Activated T-helper 1 cell treated with anti-CD3 and anti-CD28 coated beads, Interleukin-12 subunit alpha, Interleukin-12 subunit beta, Interleukin-2, Interleukin-4 antibody, amounts not matched to agents 30 ng/mL and 10 ng/mL and 1 ng/mL, durations not matched to agents 14 hours and 24 hours and 36 hours (primary cell): ENCODE measurements at regions of chr10 and their contacts with region 1.

Region 1: GRCh38 chr10:72048450-72049124 is 39.8 kb downstream of the SPOCK2 start:
- DNase-seq: peak; percentile 75
- H3K4me3 Mint-ChIP-seq: no peak overlapping the region
- H3K27ac Mint-ChIP-seq: peak overlapping the region; percentile 0
- H3K4me1 Mint-ChIP-seq: peaks cover 12% of the 10 kb centered on the region
- H3K27me3 Mint-ChIP-seq: peaks cover 3% of the 10 kb centered on the region

Region 2: GRCh38 chr10:70602665-70603448 is 1445.7 kb before region 1 on chr10 and contains the start of gene PRF1:
- intact Hi-C with region 1: no loop called
- DNase-seq: peak; percentile 66
- H3K4me3 Mint-ChIP-seq: peak within 1 kb of the TSS; percentile 95
- H3K27ac Mint-ChIP-seq: peak within 1 kb of the TSS; percentile 97
- H3K4me1 Mint-ChIP-seq: peaks cover 32% of the 10 kb centered on the region
- H3K27me3 Mint-ChIP-seq: no peaks in the 10 kb centered on the region
- total RNA-seq, gene PRF1: 100 and 103 TPM in 2 replicates

Region 3: DNA sequence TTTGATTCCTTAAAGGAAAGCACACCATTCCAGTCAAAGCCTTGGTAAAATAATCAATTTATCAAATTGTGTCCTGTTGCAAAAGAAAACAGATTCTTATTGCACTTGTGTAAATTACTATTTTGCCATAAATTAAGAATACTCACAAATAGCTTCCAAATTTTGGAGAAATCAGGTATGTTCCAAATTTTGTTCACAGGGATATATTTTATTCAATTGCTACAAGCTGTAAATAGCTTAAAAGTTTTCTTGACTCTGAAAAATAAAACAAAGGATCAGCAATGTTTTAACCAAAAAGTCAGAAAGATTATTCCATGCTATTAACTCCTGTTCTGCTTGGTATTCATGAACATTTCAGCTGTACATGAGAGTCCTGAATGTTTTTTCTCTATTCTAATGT is 131.8 kb before region 1 on chr10:
- intact Hi-C with region 1: loop called (anchors 1 kb)
- DNase-seq: no peak
- H3K4me3 Mint-ChIP-seq: no peak overlapping the region
- H3K27ac Mint-ChIP-seq: no peak overlapping the region
- H3K4me1 Mint-ChIP-seq: no peaks in the 10 kb centered on the region
- H3K27me3 Mint-ChIP-seq: peaks cover 12% of the 10 kb centered on the region

Region 4: DNA sequence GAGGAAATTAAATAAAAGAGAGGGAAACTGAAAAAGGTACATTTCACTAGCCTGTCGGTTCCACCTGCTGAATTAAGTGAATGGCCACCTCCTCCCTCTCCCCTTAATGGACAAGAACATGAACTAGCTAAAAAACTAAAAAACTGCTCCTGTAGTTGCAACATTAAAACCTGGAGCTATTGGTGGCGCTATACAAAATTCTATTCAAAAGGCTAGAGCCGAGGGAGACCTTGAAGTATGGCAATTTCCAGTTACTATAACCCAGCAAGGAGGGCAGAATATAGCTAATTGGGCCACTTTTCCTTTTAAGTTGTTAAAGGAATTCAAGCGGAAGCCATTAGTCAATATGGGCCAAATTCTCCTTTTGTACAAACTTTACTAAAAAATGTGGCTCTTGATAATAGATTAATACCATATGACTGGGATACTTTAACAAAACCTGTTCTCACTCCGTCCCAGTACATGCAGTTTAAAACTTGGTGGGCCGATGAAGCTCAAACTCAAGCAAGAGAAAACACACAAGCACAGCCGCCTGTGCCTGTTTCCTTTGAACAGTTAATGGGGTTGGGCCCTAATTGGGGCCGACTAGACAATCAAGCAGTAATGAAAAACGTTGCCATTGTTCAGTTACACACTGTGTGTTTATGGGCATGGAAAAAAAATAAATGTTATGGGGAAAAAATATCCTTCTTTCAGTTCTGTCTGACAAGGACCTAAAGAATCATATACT is 90.9 kb before region 1 on chr10:
- intact Hi-C with region 1: loop called (anchors 1 kb)
- DNase-seq: no peak
- H3K4me3 Mint-ChIP-seq: no peak overlapping the region
- H3K27ac Mint-ChIP-seq: no peak overlapping the region
- H3K4me1 Mint-ChIP-seq: no peaks in the 10 kb centered on the region
- H3K27me3 Mint-ChIP-seq: peaks cover 45% of the 10 kb centered on the region

Region 5: DNA sequence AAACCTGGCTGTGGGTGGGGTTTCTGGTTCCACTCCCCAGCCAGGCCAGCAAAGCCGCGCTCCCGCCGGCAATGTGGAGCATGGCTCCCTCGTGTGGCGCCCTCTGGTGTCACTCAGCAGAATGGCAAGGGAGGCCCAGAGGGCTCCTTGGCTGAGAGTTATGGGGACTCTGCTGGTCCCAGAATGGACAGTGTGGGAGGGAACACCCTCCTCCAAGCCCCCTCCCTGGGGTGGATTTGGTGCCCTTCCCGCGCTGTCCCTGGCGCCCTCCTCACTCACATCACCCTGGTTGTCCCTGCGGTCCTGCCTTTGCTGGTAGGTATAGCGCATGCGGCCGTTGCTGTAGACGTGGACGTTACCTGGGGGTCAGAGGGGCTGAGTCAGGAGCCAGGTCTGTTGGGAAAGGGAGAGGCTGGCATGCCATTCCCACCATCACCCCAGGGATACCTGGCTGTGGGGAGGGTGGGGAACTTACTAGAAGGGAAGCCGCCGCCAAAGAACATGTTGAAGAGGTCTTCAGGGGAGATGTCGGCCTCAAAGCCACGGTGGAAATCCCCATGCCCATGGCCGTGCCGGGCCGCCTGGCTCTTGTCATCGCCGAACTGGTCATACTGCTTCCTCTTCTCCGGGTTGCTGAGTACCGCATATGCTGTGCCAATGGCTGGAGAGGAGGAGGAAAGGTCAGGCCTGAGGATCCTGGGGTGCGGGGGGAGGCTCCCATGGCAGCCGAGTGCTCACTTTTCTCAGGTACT is 292.1 kb after region 1 on chr10:
- intact Hi-C with region 1: loop called (anchors 1 kb)
- DNase-seq: peak; percentile 75
- H3K4me3 Mint-ChIP-seq: no peak overlapping the region
- H3K27ac Mint-ChIP-seq: no peak overlapping the region
- H3K4me1 Mint-ChIP-seq: peaks cover 40% of the 10 kb centered on the region
- H3K27me3 Mint-ChIP-seq: no peaks in the 10 kb centered on the region

Region 6: GRCh38 chr10:72852508-72852907 is 803.9 kb after region 1 on chr10:
- intact Hi-C with region 1: no loop called
- DNase-seq: no peak
- H3K4me3 Mint-ChIP-seq: no peak overlapping the region
- H3K27ac Mint-ChIP-seq: no peak overlapping the region
- H3K4me1 Mint-ChIP-seq: no peaks in the 10 kb centered on the region
- H3K27me3 Mint-ChIP-seq: no peaks in the 10 kb centered on the region